H1 (cell line): ENCODE measurements at regions of chr16 and their contacts with region 1.

Region 1: DNA sequence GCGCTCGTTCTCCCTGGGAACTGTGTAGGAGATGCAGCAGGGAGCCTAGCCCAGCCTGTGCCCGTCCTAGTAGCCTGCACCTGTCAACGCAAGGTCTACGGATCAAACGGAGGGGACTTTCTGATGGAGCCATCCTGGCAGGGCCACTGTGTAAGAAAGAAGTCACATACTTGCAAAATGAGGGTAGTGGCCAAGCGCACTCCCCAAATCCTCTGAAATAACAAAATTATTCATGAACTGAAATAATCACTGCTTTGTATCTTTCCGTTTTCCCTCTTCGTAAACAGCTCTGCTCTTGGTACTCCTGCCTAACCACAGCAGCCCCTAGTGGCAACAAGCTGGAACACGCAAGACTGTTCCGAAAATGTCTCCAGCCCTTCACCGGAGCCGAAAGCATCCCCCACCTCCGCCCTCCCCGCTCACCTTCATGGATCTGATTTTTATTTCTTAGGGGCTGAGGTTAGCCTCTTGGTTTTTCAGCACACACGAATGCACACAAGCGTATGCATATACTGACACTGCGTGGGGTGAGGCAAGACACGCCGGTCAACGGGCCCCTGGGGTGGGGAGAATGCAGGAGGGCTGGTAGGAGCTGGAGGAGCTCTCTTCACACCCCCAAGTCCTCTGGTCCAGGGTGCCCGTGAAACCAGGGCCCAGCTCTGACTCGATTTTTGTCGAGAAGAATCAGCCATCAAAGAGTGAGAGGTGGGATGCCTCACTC is 100.8 kb downstream of the ABCC12 start:
- DNase-seq: peak in 1 of 2 experiments; percentile 68
- H3K4me3 ChIP-seq: peak overlapping the region in 1 of 4 experiments; percentile 10; a peak in 3 of 8 replicates
- H3K27ac ChIP-seq: no peak overlapping the region
- H3K4me1 ChIP-seq: peaks cover 0 to 7% (median 5%) of the 10 kb centered on the region in 4 experiments; a peak in 2 of 7 replicates
- H3K27me3 ChIP-seq: no peaks in the 10 kb centered on the region
- CTCF ChIP-seq: peak; percentile 75 to 93 (median 88)
- EP300 ChIP-seq: no peak
- POLR2A ChIP-seq: no peak
- RAD21 ChIP-seq: peak; percentile 86 to 88

Region 2: DNA sequence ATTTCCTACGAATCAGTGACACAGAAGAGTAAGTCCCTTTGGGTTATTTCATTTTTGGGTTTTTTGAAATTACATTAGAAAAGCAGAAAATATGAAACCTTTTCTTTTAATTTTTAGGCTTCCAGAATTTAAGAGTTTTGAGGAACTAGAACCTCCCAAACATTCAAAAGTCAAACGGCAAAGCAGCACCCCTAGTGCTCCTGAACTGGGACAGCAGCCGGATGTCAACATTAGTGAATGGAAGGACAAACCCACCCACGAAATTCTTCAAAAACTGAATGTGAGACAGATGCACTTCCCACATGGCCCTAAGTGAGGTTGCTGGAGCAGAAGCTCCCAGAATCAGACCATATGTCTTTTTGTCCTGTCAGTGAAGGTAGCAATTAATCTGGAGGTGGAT is 394.5 kb before region 1 on chr16:
- CTCF ChIA-PET with region 1: no interaction called
- POLR2A ChIA-PET with region 1: no interaction called
- DNase-seq: no peak
- H3K4me3 ChIP-seq: no peak overlapping the region
- H3K27ac ChIP-seq: no peak overlapping the region
- H3K4me1 ChIP-seq: no peaks in the 10 kb centered on the region
- H3K27me3 ChIP-seq: no peaks in the 10 kb centered on the region
- CTCF ChIP-seq: peak in 2 of 3 experiments; percentile 14 to 35; a peak in 3 of 4 replicates
- EP300 ChIP-seq: no peak
- POLR2A ChIP-seq: no peak
- RAD21 ChIP-seq: peak; percentile 33 to 46

Region 3: GRCh38 chr16:48029768-48030167 is 25.3 kb before region 1 on chr16:
- CTCF ChIA-PET with region 1: interaction called, 11 read pairs
- POLR2A ChIA-PET with region 1: no interaction called
- DNase-seq: no peak
- H3K4me3 ChIP-seq: no peak overlapping the region
- H3K27ac ChIP-seq: no peak overlapping the region
- H3K4me1 ChIP-seq: peaks cover 0 to 4% (median 2%) of the 10 kb centered on the region in 4 experiments; a peak in 2 of 7 replicates
- H3K27me3 ChIP-seq: no peaks in the 10 kb centered on the region; a peak in 1 of 7 replicates
- CTCF ChIP-seq: peak in 1 of 3 experiments; percentile 8; a peak in 1 of 4 replicates
- EP300 ChIP-seq: no peak
- POLR2A ChIP-seq: no peak
- RAD21 ChIP-seq: peak; percentile 22; a peak in 3 of 4 replicates

Region 4: DNA sequence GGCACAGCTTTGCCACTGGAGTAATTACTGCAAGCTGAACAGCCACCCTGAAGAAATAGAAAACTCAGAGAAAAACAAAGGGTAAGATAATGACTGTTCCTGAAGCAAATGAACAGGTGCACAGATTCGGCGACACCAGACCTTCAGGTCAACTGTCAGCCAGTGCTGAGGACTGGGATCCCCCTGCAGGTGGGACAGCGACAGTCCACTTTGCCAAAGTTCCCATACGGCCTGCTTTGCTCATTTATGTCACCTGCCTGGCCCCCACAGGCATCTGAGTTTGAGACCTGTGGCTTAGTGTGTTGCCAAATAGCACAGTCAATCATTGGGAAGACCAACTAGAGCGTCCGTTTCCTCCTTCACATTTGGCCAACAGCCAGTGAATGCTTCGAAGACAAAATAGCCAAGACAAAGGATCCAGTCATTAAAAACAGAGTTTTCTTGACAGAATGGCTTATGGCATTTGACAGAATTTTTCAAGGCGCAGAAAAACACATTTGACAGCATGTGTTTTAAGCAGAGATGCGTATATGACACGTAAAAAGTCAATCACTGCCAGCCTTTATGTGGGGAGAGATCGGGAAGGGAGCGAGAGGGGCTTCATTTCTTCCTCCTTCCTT is 13.1 kb before region 1 on chr16:
- CTCF ChIA-PET with region 1: interaction called, 22 read pairs
- POLR2A ChIA-PET with region 1: no interaction called
- DNase-seq: no peak
- H3K4me3 ChIP-seq: no peak overlapping the region
- H3K27ac ChIP-seq: no peak overlapping the region
- H3K4me1 ChIP-seq: peaks cover 0 to 3% (median 1%) of the 10 kb centered on the region in 4 experiments; a peak in 2 of 7 replicates
- H3K27me3 ChIP-seq: no peaks in the 10 kb centered on the region
- CTCF ChIP-seq: peak; percentile 58 to 79 (median 77)
- EP300 ChIP-seq: no peak
- POLR2A ChIP-seq: no peak
- RAD21 ChIP-seq: peak; percentile 75 to 79

Region 5: DNA sequence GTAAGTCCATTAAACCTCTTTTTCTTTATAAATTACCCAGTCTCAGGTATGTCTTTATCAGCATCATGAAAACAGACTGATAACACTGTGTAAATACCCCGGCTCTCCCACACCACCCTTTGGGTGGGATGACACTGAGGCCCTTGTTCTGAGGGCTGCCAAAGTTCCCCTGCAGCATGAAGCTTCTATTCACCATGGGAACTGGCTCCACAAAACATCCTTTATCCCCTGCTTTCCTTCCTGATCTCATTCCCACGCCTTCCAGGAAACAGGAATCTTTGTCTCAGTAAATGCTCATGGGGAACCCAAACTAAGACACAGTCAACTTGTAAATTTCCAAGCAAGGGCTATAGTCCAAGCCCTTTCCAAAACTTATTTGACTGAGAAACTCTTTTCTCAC is 12.3 kb after region 1 on chr16:
- CTCF ChIA-PET with region 1: interaction called, 10 read pairs
- POLR2A ChIA-PET with region 1: no interaction called
- DNase-seq: no peak
- H3K4me3 ChIP-seq: no peak overlapping the region
- H3K27ac ChIP-seq: no peak overlapping the region
- H3K4me1 ChIP-seq: no peaks in the 10 kb centered on the region
- H3K27me3 ChIP-seq: no peaks in the 10 kb centered on the region
- CTCF ChIP-seq: no peak
- EP300 ChIP-seq: no peak
- POLR2A ChIP-seq: no peak
- RAD21 ChIP-seq: no peak

Region 6: GRCh38 chr16:48098472-48098871 is 43.4 kb after region 1 on chr16:
- CTCF ChIA-PET with region 1: no interaction called
- POLR2A ChIA-PET with region 1: no interaction called
- DNase-seq: no peak
- H3K4me3 ChIP-seq: no peak overlapping the region
- H3K27ac ChIP-seq: no peak overlapping the region
- H3K4me1 ChIP-seq: peaks cover 0 to under 1% (median 0%) of the 10 kb centered on the region in 4 experiments; a peak in 1 of 7 replicates
- H3K27me3 ChIP-seq: no peaks in the 10 kb centered on the region
- CTCF ChIP-seq: no peak
- EP300 ChIP-seq: no peak
- POLR2A ChIP-seq: no peak
- RAD21 ChIP-seq: no peak